A673 (cell line): ENCODE measurements at regions of chr17 and their contacts with region 1.

Region 1: DNA sequence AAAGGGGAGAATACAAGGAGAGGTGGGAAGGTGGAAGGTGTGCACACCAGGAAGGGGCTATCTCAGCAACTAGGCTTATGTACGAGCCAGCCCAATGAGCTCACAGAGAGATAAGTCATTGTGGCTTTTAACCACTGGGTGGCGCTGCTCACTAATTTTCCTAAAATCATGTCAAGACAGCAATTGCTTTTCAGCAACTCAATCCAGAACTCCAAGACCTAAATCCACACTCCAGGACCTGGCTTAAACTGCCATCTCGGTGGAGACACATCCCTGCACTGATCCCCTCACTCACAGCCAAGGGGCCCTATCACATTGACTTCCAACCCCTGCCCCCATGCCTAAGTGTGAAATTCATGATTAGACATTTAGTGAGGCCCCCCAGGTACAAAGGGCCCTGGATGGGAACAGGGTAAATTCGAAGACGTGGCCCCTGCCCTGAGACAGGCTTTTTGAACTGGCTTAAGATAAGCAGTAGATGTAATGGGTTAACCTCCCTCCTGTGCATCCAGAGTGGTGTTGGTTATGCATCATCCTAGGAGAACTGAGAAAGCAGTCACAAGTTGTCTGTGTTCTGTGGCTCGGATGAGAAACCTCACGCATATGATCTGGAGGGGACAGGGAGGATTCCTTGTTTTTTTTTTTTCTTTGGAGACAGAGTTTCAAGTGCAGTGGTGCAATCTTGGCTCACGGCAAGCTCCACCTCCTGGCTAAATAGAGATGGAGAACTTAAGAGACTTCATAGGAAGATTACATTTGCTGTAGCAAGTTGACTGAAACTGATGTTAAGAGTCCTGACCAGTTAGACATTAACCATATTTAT is 11.5 kb downstream of the CCL16 start:
- DNase-seq: peak; percentile 65
- H3K4me3 ChIP-seq: no peak overlapping the region
- H3K27ac ChIP-seq: no peak overlapping the region
- H3K4me1 ChIP-seq: no peaks in the 10 kb centered on the region
- H3K27me3 ChIP-seq: no peaks in the 10 kb centered on the region
- CTCF ChIP-seq: peak; percentile 63

Region 2: GRCh38 chr17:35825206-35825605 is 144.6 kb before region 1 on chr17:
- CTCF ChIA-PET with region 1: no interaction called
- POLR2A ChIA-PET with region 1: no interaction called
- intact Hi-C with region 1: no loop called
- DNase-seq: no peak
- H3K4me3 ChIP-seq: no peak overlapping the region
- H3K27ac ChIP-seq: no peak overlapping the region
- H3K4me1 ChIP-seq: no peaks in the 10 kb centered on the region
- H3K27me3 ChIP-seq: no peaks in the 10 kb centered on the region
- CTCF ChIP-seq: no peak

Region 3: DNA sequence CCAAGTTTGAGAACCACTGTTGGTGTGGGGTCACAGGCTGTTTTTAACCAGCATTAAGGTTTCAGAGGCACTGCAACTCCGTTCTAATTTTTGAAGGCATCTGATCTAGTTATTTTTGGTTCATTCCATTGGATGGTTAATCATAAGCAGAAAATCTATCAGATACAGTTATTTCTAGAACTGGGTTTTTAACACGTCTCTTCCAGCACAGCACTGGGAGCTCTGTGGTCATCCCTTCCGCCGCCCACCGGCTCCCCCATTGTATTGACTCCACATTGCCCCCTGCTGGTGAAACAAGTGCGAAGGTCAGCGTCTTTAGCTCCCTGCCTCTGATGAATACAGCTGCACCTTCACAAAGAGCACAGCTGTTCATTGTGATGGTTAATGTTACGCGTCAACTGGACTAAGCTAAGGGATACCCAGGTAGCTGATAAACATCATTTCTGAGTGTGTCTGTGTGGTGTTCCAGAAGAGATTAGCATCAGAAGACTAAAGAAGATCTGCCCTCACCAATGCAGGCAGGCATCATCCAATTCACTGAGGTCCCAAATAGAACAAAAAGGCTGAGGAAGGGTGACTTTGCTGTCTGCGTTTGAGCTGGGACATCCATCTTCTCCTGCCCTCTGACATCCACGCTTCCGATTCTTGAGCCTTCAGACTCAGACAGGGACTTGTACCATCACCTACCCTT is 102.8 kb after region 1 on chr17:
- CTCF ChIA-PET with region 1: interaction called, 13 read pairs
- POLR2A ChIA-PET with region 1: no interaction called
- intact Hi-C with region 1: loop called (anchors 10 kb)
- DNase-seq: peak; percentile 38
- H3K4me3 ChIP-seq: no peak overlapping the region
- H3K27ac ChIP-seq: no peak overlapping the region
- H3K4me1 ChIP-seq: no peaks in the 10 kb centered on the region
- H3K27me3 ChIP-seq: no peaks in the 10 kb centered on the region
- CTCF ChIP-seq: peak; percentile 63

Region 4: DNA sequence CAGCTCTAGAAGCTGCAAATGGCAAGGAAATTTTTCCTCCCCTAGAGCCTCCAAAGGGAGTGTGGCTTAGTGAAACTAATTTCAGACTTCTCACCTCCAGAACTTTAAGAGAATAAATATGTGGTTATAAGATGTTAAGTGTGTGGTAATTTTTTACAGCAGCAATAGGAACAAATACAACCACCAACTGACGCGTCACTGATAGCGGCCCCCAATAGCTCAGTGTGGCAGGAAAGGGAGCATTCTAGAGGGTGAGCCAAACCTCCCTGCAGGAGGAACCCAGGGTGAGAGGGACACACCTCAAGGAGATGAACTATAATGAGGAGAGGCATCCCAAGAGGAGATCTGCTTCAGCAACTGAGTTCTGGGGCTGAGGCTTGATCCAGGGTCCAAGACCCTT is 137.9 kb after region 1 on chr17:
- CTCF ChIA-PET with region 1: no interaction called
- POLR2A ChIA-PET with region 1: no interaction called
- intact Hi-C with region 1: no loop called
- DNase-seq: no peak
- H3K4me3 ChIP-seq: no peak overlapping the region
- H3K27ac ChIP-seq: no peak overlapping the region
- H3K4me1 ChIP-seq: no peaks in the 10 kb centered on the region
- H3K27me3 ChIP-seq: no peaks in the 10 kb centered on the region
- CTCF ChIP-seq: no peak

Region 5: DNA sequence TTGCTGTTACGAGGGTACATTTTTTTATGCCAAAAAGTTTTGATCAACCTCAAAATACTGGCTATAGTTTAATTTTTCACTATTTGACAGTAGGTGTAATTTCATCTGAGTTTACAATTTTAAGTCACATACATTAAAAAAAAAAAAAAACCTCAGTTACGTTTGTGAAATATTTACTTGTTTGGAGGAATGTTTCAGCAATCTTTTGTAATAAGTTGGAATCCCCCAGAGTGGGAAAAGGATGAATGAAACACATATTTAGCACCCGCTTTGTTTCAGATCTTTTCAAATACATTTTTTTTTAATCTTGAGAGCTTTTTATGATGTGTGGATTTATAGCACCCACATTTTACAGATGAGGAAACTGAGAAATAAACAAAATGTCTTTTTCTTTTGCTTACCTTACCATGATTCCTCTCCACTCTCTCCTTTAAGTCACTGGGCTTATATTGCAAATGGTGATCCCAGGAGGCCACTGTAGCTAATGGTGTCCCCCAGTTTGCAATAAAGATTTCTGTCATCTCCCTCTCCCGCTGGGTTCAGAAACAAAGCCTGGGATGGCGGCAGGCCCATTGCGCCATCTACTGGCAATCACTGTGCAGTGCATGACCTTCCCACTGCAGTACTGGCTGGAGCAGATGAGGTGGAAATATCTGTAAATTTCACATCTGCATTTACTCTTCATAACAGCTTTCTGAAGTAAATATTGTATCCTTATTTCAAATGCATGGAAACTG is 179.0 kb after region 1 on chr17:
- CTCF ChIA-PET with region 1: interaction called, 4 read pairs
- POLR2A ChIA-PET with region 1: no interaction called
- intact Hi-C with region 1: loop called (anchors 10 kb)
- DNase-seq: peak; percentile 56
- H3K4me3 ChIP-seq: no peak overlapping the region
- H3K27ac ChIP-seq: no peak overlapping the region
- H3K4me1 ChIP-seq: no peaks in the 10 kb centered on the region
- H3K27me3 ChIP-seq: no peaks in the 10 kb centered on the region
- CTCF ChIP-seq: peak; percentile 86

Region 6: GRCh38 chr17:36486204-36487194 is 516.7 kb after region 1 on chr17 and contains the start of gene ZNHIT3:
- CTCF ChIA-PET with region 1: no interaction called
- POLR2A ChIA-PET with region 1: no interaction called
- intact Hi-C with region 1: loop called (anchors 10 kb)
- DNase-seq: peak; percentile 92
- H3K4me3 ChIP-seq: peak within 1 kb of the TSS; percentile 69
- H3K27ac ChIP-seq: peak within 1 kb of the TSS; percentile 78
- H3K4me1 ChIP-seq: peaks cover 4% of the 10 kb centered on the region
- H3K27me3 ChIP-seq: peaks cover 8% of the 10 kb centered on the region
- CTCF ChIP-seq: no peak
- total RNA-seq, gene ZNHIT3: 30.4 and 35.2 TPM in 2 replicates